ENCODE measurements at regions of chr5 and their contacts with region 1.

Region 1: DNA sequence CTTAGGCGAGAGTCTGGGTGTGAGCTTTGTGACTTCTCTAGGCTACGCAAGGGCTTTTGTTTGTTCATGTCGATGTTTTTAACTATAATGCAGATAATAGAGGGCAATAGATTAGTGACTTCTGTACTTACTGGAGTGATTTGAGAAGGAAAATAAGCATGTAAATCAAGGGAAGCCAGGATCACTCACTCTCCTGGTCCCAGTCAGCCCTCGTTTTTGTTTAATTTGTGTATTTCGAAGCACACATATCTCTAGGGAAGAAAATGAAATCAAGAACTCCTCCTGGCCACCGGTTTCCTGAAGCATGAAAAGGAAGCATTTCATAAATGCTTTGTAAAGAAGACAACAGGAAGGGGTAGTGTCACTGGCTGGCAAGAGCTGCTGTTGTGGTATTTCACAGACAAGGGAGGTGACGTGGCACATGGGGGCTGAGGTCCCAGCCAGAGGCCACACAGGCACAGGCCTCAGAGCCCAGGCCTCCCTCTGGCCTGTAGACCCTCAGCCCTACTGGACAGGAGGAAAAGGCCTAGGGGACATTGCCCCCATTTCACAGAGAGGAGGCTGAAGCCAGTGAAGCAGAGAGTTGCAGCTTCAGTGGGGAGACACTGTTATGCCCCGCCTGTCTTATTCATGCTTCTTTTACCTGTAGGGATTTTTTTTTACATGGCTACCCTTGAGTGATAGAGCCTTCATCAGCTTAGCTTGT is 34.1 kb downstream of the IRF1 start:
- DNase-seq: peak in 34 of 35 experiments; percentile 48 to 83 (median 70)
- ATAC-seq: peak; percentile 77 to 82 (median 78)
- H3K4me3 ChIP-seq: peak overlapping the region; percentile 23 to 32
- H3K4me3 Mint-ChIP-seq: peak overlapping the region; percentile 58 to 76 (median 70)
- H3K27ac ChIP-seq: peak overlapping the region; percentile 96
- H3K27ac Mint-ChIP-seq: peak overlapping the region; percentile 100
- H3K4me1 ChIP-seq: peaks cover 47 to 84% of the 10 kb centered on the region in 2 experiments
- H3K4me1 Mint-ChIP-seq: peaks cover 92 to 95% (median 93%) of the 10 kb centered on the region in 3 donors
- H3K27me3 ChIP-seq: no peaks in the 10 kb centered on the region
- H3K27me3 Mint-ChIP-seq: no peaks in the 10 kb centered on the region

Region 2: GRCh38 chr5:132419502-132420468 is 36.7 kb before region 1 on chr5:
- CTCF ChIA-PET with region 1: interaction called, 6 to 16 read pairs
- POLR2A ChIA-PET with region 1: interaction called in 1 of 2 experiments, 7 read pairs
- DNase-seq: peak in 31 of 35 experiments; percentile 27 to 82 (median 48)
- ATAC-seq: peak; percentile 65 to 72 (median 67)
- H3K4me3 ChIP-seq: no peak overlapping the region
- H3K4me3 Mint-ChIP-seq: peak overlapping the region; percentile 71 to 75 (median 74)
- H3K27ac ChIP-seq: peak overlapping the region; percentile 94
- H3K27ac Mint-ChIP-seq: peak overlapping the region; percentile 98 to 100
- H3K4me1 ChIP-seq: peaks cover 36 to 80% of the 10 kb centered on the region in 2 experiments
- H3K4me1 Mint-ChIP-seq: peaks cover 97 to 98% (median 98%) of the 10 kb centered on the region in 3 donors
- H3K27me3 ChIP-seq: no peaks in the 10 kb centered on the region
- H3K27me3 Mint-ChIP-seq: no peaks in the 10 kb centered on the region

Region 3: DNA sequence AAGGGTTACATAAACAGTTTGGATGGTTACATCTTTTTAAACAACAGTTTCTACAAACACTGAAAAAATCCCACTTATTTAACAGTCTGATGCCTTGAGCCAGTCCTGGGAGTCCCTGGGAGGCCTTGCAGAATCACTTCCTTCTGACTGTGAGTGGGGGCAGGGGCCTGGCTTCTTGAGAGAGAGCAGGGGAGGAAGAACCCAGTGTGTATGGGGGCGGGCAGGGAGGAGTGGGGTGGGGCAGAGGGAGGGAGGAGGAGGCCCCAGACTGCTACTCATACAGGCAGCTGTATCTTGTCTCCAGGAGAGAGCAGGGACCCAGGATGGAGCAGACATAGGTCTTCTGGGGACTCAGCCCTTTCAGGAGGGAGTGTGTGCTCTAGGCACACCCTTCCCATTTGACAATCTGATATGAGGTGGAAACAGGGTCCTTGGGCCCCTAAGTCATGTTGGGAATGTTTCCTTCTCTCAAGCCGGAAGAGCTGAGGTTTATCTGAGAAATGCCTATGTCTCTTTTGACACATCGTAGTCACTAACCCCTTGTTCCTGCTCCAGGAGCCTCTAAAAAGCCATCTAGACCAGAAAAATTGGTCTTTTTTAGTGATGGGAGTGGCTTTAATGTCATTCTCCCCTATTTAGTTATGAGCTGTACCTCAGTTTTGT is 18.7 kb before region 1 on chr5:
- CTCF ChIA-PET with region 1: interaction called in 1 of 2 experiments, 16 read pairs
- POLR2A ChIA-PET with region 1: interaction called, 3 to 8 read pairs
- DNase-seq: peak; percentile 40 to 76 (median 61)
- ATAC-seq: peak; percentile 93 to 98 (median 95)
- H3K4me3 ChIP-seq: no peak overlapping the region
- H3K4me3 Mint-ChIP-seq: peak overlapping the region; percentile 37 to 68 (median 47)
- H3K27ac ChIP-seq: peak overlapping the region; percentile 58
- H3K27ac Mint-ChIP-seq: peak overlapping the region; percentile 92 to 93
- H3K4me1 ChIP-seq: peaks cover 36 to 81% of the 10 kb centered on the region in 2 experiments
- H3K4me1 Mint-ChIP-seq: peaks cover 89 to 92% (median 91%) of the 10 kb centered on the region in 3 donors
- H3K27me3 ChIP-seq: no peaks in the 10 kb centered on the region
- H3K27me3 Mint-ChIP-seq: no peaks in the 10 kb centered on the region

Region 4: DNA sequence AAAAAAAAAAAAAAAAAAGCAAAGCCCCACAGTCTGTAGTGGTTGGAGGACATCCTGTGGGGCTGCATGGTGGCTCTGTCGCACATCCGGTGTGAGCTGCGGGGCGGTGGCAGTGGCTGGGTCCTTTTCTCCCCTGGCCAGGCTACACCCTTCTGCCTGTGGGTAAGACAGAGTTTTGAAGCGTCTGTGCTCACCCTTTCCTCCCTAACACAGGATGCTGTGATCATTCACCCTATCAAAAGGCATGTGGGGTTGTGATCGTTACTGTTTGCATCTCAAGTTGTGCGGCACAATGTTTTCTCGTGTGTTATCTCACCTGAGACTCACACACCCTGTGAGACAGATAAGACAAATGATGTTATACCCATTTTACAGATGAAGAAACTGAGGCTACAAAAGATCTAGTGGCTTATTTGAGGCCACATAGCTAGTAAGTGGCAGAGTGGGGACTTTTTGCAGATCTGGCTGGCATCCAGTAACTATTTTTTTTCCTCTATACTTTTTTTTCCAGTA is 16.6 kb after region 1 on chr5:
- CTCF ChIA-PET with region 1: interaction called, 3 to 6 read pairs
- POLR2A ChIA-PET with region 1: interaction called, 34 to 38 read pairs
- DNase-seq: peak; percentile 55 to 94 (median 89)
- ATAC-seq: peak; percentile 68 to 91 (median 86)
- H3K4me3 ChIP-seq: no peak overlapping the region
- H3K4me3 Mint-ChIP-seq: peak overlapping the region; percentile 41 to 46 (median 43)
- H3K27ac ChIP-seq: peak overlapping the region; percentile 85
- H3K27ac Mint-ChIP-seq: peak overlapping the region; percentile 93 to 97
- H3K4me1 ChIP-seq: peaks cover 28 to 98% of the 10 kb centered on the region in 2 experiments
- H3K4me1 Mint-ChIP-seq: peaks cover 85 to 93% (median 90%) of the 10 kb centered on the region in 3 donors
- H3K27me3 ChIP-seq: no peaks in the 10 kb centered on the region
- H3K27me3 Mint-ChIP-seq: no peaks in the 10 kb centered on the region

Region 5: GRCh38 chr5:132490486-132491367 is 34.3 kb after region 1 on chr5 and contains the start of gene IRF1:
- CTCF ChIA-PET with region 1: interaction called in 1 of 2 experiments, 9 read pairs
- POLR2A ChIA-PET with region 1: interaction called, 4 to 44 read pairs
- DNase-seq: peak; percentile 93 to 99 (median 98)
- ATAC-seq: peak; percentile 79 to 86 (median 82)
- H3K4me3 ChIP-seq: peak within 1 kb of the TSS; percentile 78 to 90
- H3K4me3 Mint-ChIP-seq: peak within 1 kb of the TSS; percentile 95 to 96 (median 96)
- H3K27ac ChIP-seq: peak within 1 kb of the TSS; percentile 98
- H3K27ac Mint-ChIP-seq: peak within 1 kb of the TSS; percentile 97 to 99
- H3K4me1 ChIP-seq: peaks cover 59 to 67% of the 10 kb centered on the region in 2 experiments
- H3K4me1 Mint-ChIP-seq: peaks cover 68 to 85% (median 76%) of the 10 kb centered on the region in 3 donors
- H3K27me3 ChIP-seq: no peaks in the 10 kb centered on the region
- H3K27me3 Mint-ChIP-seq: no peaks in the 10 kb centered on the region
- total RNA-seq, gene IRF1: 167 to 859 (median 252) TPM

Measured in T-cell (primary cell).